ENCODE measurements at regions of chr7 and their contacts with region 1.

Region 1: DNA sequence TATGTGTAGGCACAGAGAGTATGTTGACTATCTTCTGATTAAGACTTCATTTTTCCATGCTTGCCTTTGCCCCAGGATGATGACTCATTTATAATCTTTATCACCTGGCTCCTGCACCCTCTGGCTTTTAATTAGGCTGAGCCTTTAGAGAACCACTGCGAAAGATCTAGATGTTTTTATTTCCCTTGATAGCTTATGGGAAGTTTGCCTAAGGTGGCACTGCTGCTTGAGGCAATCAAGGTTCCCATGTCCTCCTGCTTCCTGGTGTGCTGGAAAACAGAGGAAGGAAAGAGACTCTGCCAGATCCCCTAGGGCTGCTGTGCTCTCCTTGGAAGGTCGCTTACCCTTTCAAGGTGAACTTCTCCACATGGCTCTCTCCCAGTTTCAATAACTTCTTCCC is 114.7 kb downstream of the ARL4A start:
- DNase-seq: peak; percentile 18
- H3K4me3 Mint-ChIP-seq: peak overlapping the region; percentile 56
- H3K27ac Mint-ChIP-seq: peak overlapping the region; percentile 92
- H3K4me1 Mint-ChIP-seq: peaks cover 43% of the 10 kb centered on the region
- H3K27me3 Mint-ChIP-seq: no peaks in the 10 kb centered on the region
- CTCF ChIP-seq: no peak

Region 2: DNA sequence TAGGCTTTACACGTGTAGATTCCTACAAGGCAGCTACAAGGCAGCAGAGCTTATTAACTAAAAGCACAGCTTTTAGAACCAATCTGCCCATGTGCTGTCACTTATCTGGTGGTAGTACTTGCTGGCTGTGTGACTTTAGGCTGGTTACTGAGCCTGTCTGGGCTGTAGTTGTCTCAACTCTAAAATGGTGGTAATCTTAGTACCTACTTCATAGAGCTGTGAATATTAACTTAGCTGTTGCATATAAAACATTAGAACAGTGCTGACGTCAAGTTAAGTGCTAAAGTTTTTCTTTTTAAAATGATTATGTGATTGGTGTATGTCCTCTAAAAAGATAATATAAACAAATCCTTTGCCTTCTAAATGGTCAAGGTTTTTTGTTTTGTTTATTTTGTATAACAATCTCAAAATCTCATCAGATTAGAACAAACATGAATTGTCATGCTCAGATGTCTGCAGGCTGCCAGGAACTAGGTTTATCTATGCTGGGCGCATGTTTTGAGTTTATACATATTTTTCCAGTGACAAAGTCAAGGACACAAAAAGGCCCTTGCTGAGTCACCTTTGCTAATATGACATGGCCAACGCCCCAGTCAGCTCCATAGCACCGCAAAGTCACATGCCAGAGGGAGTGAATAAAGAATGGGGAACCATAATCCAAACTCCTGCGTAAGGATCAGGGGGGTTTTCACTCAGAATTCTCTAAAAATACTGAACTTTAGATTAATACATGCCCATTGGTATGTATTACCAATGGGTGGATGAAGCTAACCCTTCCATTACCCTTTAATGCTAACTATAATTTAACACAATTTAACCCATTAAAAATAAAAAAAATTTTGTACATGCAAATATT is 154.5 kb before region 1 on chr7:
- CTCF ChIA-PET with region 1: no interaction called
- intact Hi-C with region 1: loop called (anchors 5 kb)
- DNase-seq: peak; percentile 81
- H3K4me3 Mint-ChIP-seq: no peak overlapping the region
- H3K27ac Mint-ChIP-seq: peak overlapping the region; percentile 81
- H3K4me1 Mint-ChIP-seq: peaks cover 60% of the 10 kb centered on the region
- H3K27me3 Mint-ChIP-seq: no peaks in the 10 kb centered on the region
- CTCF ChIP-seq: no peak

Region 3: DNA sequence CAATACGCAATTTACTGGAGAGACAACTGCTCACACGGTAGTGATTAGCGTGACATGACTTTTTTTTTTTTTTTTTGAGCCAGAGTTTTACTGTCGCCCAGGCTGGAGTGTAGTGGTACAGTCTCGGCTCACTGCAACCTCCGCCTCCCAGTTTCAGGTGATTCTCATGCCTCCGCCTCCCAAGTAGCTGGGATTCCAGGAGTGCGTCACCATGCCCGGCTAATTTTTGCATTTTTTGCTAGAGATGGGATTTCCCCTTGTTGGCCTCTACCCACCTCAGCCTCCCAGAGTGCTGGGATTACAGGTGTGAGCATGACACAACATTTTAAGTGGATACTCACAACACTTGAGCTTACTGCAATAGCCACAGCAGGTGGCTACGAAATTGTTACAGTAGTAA is 102.8 kb before region 1 on chr7:
- CTCF ChIA-PET with region 1: no interaction called
- intact Hi-C with region 1: no loop called
- DNase-seq: no peak
- H3K4me3 Mint-ChIP-seq: no peak overlapping the region
- H3K27ac Mint-ChIP-seq: no peak overlapping the region
- H3K4me1 Mint-ChIP-seq: peaks cover 26% of the 10 kb centered on the region
- H3K27me3 Mint-ChIP-seq: no peaks in the 10 kb centered on the region
- CTCF ChIP-seq: no peak

Region 4: DNA sequence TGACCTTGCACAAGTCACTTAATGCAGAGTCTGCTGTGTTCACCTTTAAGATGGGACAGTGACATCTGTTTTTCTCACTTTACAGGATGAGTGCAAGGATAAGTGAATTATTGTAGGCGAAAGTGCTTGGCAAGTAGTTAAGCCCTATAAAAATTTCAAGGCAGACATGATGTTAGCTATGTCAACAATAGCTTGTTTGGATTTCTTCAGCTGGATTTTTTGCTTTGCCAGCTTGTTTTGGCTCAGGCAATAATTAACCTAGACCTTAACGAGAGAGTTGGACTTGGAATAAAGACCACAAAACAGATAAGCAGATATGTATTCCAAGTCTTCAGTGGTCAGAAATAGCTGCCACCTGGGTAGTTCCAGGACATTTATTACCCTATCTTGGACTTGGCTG is 140.5 kb after region 1 on chr7:
- CTCF ChIA-PET with region 1: no interaction called
- intact Hi-C with region 1: loop called (anchors 5 kb)
- DNase-seq: no peak
- H3K4me3 Mint-ChIP-seq: no peak overlapping the region
- H3K27ac Mint-ChIP-seq: no peak overlapping the region
- H3K4me1 Mint-ChIP-seq: peaks cover 24% of the 10 kb centered on the region
- H3K27me3 Mint-ChIP-seq: no peaks in the 10 kb centered on the region
- CTCF ChIP-seq: no peak

Measured in Calu3 (cell line).